ENCODE measurements at regions of chr6 and their contacts with region 1.

Region 1: DNA sequence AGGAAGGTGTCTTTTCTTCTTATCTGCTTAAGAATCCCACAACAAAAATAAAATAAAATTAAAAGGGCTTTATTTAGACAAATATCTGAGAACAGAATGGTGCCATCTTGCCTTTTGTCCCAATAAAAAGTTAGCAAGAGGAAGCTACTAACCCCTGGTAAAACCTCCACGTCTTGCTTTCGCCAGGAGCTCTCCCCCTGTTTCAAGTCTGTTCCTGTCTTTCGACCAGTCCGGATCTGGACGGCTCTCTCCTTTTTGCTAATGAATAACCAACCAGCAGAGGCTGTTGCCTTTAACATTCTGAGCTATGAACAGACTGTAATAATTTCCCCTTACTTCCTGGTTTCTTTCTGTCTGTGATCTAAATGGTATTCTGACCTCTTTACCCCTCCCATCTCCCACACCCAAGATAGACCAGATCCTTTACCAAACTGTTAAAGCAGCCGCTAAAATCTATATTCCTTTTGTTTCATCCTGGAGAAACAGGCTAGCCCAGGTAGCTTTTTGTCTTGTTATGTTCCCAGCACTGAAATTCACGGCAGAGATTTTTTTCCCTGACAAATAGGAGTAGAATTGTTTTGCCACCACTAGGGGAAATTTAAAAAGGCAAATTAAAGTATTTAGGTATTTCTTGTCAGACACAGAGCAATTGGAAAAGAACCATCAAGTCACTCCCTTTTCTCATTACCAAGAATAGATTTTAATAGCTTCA is at the start of gene FRK:
- DNase-seq: peak; percentile 79
- H3K4me3 Mint-ChIP-seq: peak within 1 kb of the TSS; percentile 76
- H3K27ac Mint-ChIP-seq: peak within 1 kb of the TSS; percentile 96
- H3K4me1 Mint-ChIP-seq: peaks cover 28% of the 10 kb centered on the region
- H3K27me3 Mint-ChIP-seq: no peaks in the 10 kb centered on the region
- CTCF ChIP-seq: peak; percentile 29
- total RNA-seq, gene FRK: 0.82 and 0.98 TPM in 2 replicates

Region 2: GRCh38 chr6:116010790-116011401 is 49.8 kb before region 1 on chr6:
- CTCF ChIA-PET with region 1: interaction called, 47 read pairs
- POLR2A ChIA-PET with region 1: interaction called, 40 read pairs
- intact Hi-C with region 1: loop called (anchors 1 kb)
- DNase-seq: peak; percentile 81
- H3K4me3 Mint-ChIP-seq: no peak overlapping the region
- H3K27ac Mint-ChIP-seq: peak overlapping the region; percentile 75
- H3K4me1 Mint-ChIP-seq: peaks cover 27% of the 10 kb centered on the region
- H3K27me3 Mint-ChIP-seq: no peaks in the 10 kb centered on the region
- CTCF ChIP-seq: peak; percentile 81

Region 3: GRCh38 chr6:116016846-116017545 is 43.7 kb before region 1 on chr6:
- CTCF ChIA-PET with region 1: interaction called, 47 read pairs
- POLR2A ChIA-PET with region 1: interaction called, 40 read pairs
- intact Hi-C with region 1: no loop called
- DNase-seq: peak; percentile 14
- H3K4me3 Mint-ChIP-seq: no peak overlapping the region
- H3K27ac Mint-ChIP-seq: peak overlapping the region; percentile 36
- H3K4me1 Mint-ChIP-seq: peaks cover 35% of the 10 kb centered on the region
- H3K27me3 Mint-ChIP-seq: no peaks in the 10 kb centered on the region
- CTCF ChIP-seq: no peak

Region 4: DNA sequence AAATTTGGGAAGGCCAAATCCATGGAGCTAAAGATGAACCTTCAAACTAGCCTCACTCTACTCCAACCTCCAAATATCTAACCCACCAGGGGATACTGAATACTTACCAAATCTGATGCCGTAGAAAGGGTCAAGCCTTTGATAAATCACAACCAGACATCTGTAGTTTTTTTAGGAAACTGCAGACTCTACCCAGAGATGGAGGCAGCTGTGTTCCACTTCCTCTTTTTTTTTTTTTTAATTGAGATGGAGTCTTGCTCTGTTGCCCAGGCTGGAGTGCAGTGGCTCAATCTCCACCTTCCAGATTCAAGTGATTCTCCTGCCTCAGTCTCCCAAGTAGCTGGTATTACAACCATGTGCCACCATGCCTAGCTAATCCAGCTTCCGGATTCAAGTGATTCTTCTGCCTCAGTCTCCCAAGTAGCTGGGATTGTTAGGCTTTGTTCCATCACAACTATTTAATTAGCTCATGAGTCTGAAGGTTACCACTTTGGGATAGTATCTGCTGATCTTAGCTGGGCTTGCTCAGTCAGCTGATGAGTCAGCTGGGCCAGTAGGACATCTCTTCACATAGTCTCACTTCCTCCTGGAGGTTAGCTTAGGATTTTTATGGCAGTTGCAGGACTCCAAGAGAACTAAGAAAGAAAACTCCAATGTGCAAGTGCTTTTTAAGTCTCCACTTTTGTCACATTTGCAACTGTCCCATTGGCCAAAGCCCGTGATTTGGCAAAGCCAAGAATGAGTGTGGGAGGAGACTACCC is 13.4 kb before region 1 on chr6:
- CTCF ChIA-PET with region 1: interaction called, 10 read pairs
- POLR2A ChIA-PET with region 1: interaction called, 5 read pairs
- intact Hi-C with region 1: no loop called
- DNase-seq: no peak
- H3K4me3 Mint-ChIP-seq: no peak overlapping the region
- H3K27ac Mint-ChIP-seq: no peak overlapping the region
- H3K4me1 Mint-ChIP-seq: peaks cover 7% of the 10 kb centered on the region
- H3K27me3 Mint-ChIP-seq: no peaks in the 10 kb centered on the region
- CTCF ChIP-seq: no peak

Region 5: DNA sequence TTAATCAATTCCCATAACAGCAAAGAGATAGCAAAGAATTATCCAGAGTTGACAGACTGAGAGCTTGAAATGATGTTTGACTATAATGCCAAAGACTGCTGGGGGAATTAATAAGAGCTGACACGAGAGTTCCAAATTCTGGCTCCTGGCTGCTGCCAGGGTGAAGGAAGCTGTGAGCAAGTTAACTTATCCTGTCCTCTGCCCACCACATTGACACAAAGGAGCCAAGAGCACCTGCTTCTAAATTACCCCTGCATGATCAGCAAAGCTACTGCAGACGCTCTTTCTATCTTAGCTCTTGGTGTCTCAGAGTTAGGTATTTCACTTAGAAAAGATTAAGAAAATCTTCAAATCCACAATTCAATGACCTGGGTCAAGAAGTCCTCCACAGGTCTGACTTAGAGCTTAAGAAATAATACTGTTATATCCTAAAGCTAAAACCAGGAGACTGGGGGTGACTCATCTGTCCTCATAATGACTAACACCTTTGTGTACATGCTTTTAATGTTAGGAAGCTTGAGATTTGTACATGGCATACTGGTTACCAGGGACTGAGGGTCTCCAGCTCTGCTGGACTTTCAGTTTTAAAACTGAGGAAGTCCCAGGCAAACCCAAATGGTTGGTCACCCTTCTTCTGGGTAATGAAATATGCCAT is 13.2 kb after region 1 on chr6:
- CTCF ChIA-PET with region 1: interaction called, 21 read pairs
- POLR2A ChIA-PET with region 1: interaction called, 13 read pairs
- intact Hi-C with region 1: no loop called
- DNase-seq: peak; percentile 76
- H3K4me3 Mint-ChIP-seq: no peak overlapping the region
- H3K27ac Mint-ChIP-seq: peak overlapping the region; percentile 63
- H3K4me1 Mint-ChIP-seq: peaks cover 16% of the 10 kb centered on the region
- H3K27me3 Mint-ChIP-seq: no peaks in the 10 kb centered on the region
- CTCF ChIP-seq: no peak

Region 6: DNA sequence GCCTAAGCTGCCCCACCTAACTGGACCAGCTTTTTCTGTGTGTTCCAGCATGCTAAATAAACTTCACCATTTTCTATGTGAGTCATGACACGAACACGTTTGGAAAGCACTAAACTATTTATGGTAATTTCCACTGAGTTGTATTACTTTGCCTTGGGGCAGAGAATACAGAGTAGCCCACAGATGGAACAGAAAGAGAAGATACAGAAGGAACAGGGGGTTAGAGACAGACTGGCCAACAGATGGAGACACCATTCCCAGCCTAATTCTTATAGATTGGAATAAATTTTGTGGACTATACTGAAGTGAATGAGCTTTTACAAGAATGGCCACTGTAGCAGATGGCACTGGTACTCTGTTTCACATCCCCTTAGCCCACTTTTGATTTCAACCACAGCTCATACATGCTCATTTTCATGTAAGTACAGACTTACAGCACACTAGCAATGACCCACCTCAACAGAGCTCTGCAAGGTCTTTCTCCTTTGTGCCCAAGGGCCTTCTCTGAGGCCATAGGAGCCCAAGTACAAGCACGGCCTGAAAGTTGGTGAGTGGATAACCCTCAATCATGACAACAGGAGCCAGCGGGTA is 26.8 kb after region 1 on chr6:
- CTCF ChIA-PET with region 1: interaction called, 23 read pairs
- POLR2A ChIA-PET with region 1: interaction called, 32 read pairs
- intact Hi-C with region 1: no loop called
- DNase-seq: peak; percentile 64
- H3K4me3 Mint-ChIP-seq: no peak overlapping the region
- H3K27ac Mint-ChIP-seq: peak overlapping the region; percentile 16
- H3K4me1 Mint-ChIP-seq: peaks cover 14% of the 10 kb centered on the region
- H3K27me3 Mint-ChIP-seq: no peaks in the 10 kb centered on the region
- CTCF ChIP-seq: no peak